ENCODE measurements at regions of chr4 and their contacts with region 1.

Region 1: GRCh38 chr4:3041192-3042142 is 32.9 kb downstream of the HTT-AS start:
- DNase-seq: peak; percentile 62
- H3K4me3 ChIP-seq: no peak overlapping the region
- H3K27ac ChIP-seq: no peak overlapping the region
- H3K4me1 ChIP-seq: peaks cover 0 to 3% of the 10 kb centered on the region in 2 experiments; a peak in 1 of 4 replicates
- H3K27me3 ChIP-seq: no peaks in the 10 kb centered on the region
- CTCF ChIP-seq: no peak
- EP300 ChIP-seq: no peak
- RAD21 ChIP-seq: no peak

Region 2: DNA sequence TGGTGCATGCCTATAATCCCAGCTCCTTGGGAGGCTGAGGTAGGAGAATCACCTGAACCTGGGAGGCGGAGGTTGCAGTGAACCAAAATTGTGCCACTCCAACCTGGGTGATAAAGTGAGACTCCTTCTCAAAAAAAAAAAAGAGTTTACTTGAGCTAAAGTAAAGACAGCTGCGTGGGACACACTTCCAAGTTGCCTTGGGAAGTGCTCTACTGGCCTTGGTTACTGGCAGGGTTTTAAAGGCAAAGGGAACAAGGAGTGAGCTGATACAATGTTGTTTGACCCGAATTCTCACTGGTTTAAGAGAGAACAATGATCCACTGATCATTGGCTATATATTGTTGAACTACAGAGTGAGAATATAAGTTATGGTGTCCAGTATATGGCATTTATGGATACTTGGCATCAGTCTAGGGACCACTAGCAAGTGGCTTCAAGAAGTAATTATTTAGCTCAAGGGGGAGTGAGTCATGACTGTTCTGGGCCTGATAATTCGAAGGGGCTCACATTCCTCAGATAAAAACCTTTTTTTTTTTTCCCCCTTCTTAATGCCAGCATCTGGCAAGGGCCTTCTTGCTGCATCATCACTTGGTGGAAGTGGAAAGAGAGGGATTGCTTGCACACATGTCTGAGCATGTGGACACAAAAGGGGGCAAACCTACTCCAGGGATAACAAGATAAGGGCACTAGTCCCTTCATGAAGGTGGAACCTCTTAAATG is 45.8 kb before region 1 on chr4:
- CTCF ChIA-PET with region 1: interaction called, 12 read pairs
- POLR2A ChIA-PET with region 1: no interaction called
- DNase-seq: no peak
- H3K4me3 ChIP-seq: no peak overlapping the region
- H3K27ac ChIP-seq: no peak overlapping the region
- H3K4me1 ChIP-seq: no peaks in the 10 kb centered on the region
- H3K27me3 ChIP-seq: no peaks in the 10 kb centered on the region
- CTCF ChIP-seq: no peak
- EP300 ChIP-seq: no peak
- RAD21 ChIP-seq: no peak

Region 3: DNA sequence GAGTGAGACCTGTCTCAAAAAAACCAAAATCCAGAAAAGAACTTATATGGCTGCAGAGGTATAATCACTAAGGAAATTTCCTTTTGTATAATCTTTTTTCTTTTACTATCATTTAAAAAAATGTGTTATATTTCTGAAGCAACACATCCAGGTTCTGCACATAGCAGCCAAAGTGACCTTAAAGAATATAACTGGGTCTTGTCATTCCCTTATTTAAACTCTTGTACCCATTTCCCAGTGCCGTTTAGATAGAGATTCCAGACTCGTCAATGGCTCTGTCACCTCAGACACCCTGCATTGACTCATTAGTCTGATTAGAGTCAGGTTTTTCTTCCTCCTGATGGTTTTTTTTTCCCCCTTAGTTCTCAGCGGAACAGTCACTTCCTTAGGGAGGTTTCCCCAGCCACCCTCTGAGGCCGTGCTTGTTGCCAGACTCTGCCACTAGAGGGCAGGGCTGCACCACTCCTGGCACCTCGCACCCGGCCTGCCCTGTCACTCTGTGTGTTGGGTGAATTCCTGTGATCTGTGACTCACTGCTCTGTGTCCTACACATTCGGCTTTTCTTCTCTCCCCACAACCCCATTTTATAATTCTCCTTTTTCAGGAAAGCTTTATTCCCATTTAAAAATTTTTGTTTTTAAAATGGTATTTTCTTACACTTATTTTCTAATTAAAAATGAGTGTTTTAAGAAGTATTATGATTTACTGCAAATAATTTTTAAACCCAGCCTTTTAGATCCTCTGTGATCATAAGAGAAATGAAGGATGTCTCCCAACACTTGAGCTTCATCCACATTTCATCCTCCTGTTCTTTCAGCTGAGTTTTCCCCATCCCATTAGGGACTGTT is 65.1 kb after region 1 on chr4:
- CTCF ChIA-PET with region 1: no interaction called
- POLR2A ChIA-PET with region 1: no interaction called
- DNase-seq: peak; percentile 88
- H3K4me3 ChIP-seq: peak overlapping the region in 1 of 2 experiments; percentile 38; a peak in 1 of 4 replicates
- H3K27ac ChIP-seq: peak overlapping the region in 1 of 2 experiments; percentile 55; a peak in 2 of 4 replicates
- H3K4me1 ChIP-seq: peaks cover 3 to 18% of the 10 kb centered on the region in 2 experiments; a peak in 3 of 4 replicates
- H3K27me3 ChIP-seq: no peaks in the 10 kb centered on the region
- CTCF ChIP-seq: peak; percentile 99
- EP300 ChIP-seq: no peak
- RAD21 ChIP-seq: peak; percentile 89

Measured in SK-N-SH (cell line).